Mammary epithelial cell (primary cell): ENCODE measurements at regions of chr17 and their contacts with region 1.

Region 1: GRCh38 chr17:74345433-74346241 is 16.0 kb downstream of the BTBD17 start:
- DNase-seq: peak; percentile 42
- H3K4me3 ChIP-seq: no peak overlapping the region
- H3K27ac ChIP-seq: no peak overlapping the region
- H3K4me1 ChIP-seq: peaks cover 7% of the 10 kb centered on the region
- H3K27me3 ChIP-seq: no peaks in the 10 kb centered on the region
- CTCF ChIP-seq: no peak

Region 2: GRCh38 chr17:74249590-74250270 is 95.9 kb before region 1 on chr17:
- CTCF ChIA-PET with region 1: no interaction called
- dilution Hi-C with region 1: loop called (anchors 5 kb)
- in situ Hi-C with region 1: no loop called
- intact Hi-C with region 1: no loop called
- DNase-seq: no peak
- H3K4me3 ChIP-seq: no peak overlapping the region
- H3K27ac ChIP-seq: no peak overlapping the region
- H3K4me1 ChIP-seq: no peaks in the 10 kb centered on the region
- H3K27me3 ChIP-seq: no peaks in the 10 kb centered on the region
- CTCF ChIP-seq: no peak

Region 3: DNA sequence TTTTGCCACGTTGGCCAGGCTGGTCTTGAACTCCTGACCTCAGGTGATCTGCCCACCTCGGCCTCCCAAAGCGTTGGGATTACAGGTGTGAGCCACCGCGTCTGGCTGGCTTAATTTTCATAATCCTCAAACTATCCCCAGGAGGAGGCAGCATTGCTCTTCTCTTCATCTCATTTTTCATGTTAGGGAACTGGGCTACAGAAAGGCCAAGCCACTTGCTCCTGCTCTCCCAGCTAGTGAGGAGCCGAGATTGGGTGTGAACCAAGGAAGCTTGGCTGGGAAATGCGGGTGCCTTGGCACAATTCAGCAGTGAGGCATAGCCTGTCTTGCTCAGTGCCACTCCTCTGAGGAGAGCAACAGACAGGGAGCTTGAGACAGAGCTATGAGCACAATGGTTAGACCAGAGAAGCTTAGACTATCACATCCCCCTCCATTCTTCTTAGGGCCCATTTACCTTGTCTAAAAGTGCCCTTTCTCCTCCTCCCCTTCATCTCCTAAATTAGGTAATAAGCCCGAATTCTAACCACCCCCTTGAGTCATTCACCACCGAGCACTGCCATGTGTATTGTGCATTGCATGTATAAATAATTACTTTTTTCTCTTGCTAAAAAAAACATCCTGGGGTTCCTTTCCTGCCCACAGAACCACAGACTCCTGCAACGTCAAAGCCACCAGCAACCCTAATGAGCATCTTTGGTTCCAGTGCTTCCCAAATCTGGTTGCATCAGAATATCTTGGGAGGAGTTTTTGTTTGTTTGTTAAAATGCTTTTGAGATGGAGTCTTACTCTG is 39.6 kb before region 1 on chr17:
- CTCF ChIA-PET with region 1: no interaction called
- dilution Hi-C with region 1: loop called (anchors 5 kb)
- in situ Hi-C with region 1: no loop called
- intact Hi-C with region 1: no loop called
- DNase-seq: no peak
- H3K4me3 ChIP-seq: no peak overlapping the region
- H3K27ac ChIP-seq: no peak overlapping the region
- H3K4me1 ChIP-seq: no peaks in the 10 kb centered on the region
- H3K27me3 ChIP-seq: no peaks in the 10 kb centered on the region
- CTCF ChIP-seq: peak in 1 of 2 donors; percentile 7

Region 4: GRCh38 chr17:74430706-74431567 is 85.3 kb after region 1 on chr17:
- CTCF ChIA-PET with region 1: no interaction called
- dilution Hi-C with region 1: loop called (anchors 5 kb)
- in situ Hi-C with region 1: no loop called
- intact Hi-C with region 1: no loop called
- DNase-seq: peak; percentile 89
- H3K4me3 ChIP-seq: peak overlapping the region; percentile 30 to 68 (median 44)
- H3K27ac ChIP-seq: peak overlapping the region; percentile 54
- H3K4me1 ChIP-seq: peaks cover 37% of the 10 kb centered on the region
- H3K27me3 ChIP-seq: peaks cover 2% of the 10 kb centered on the region
- CTCF ChIP-seq: no peak